Activated CD4-positive, alpha-beta T cell treated with anti-CD3 and anti-CD28 coated beads for 36 hours (primary cell): ENCODE measurements at regions of chrX and their contacts with region 1.

Region 1: GRCh38 chrX:23907498-23908218 is at the starts of genes APOO and CXorf58:
- DNase-seq: peak; percentile 95
- ATAC-seq: peak; percentile 94
- H3K4me3 Mint-ChIP-seq: peak within 1 kb of the TSS; percentile 75
- H3K27ac Mint-ChIP-seq: peak within 1 kb of the TSS; percentile 83
- H3K4me1 Mint-ChIP-seq: peaks cover 18% of the 10 kb centered on the region
- H3K27me3 Mint-ChIP-seq: no peaks in the 10 kb centered on the region
- total RNA-seq, gene APOO: 30.2 to 37.2 TPM
- total RNA-seq, gene CXorf58: 0.14 TPM in 1 of 2 experiments, not detected in the other

Region 2: DNA sequence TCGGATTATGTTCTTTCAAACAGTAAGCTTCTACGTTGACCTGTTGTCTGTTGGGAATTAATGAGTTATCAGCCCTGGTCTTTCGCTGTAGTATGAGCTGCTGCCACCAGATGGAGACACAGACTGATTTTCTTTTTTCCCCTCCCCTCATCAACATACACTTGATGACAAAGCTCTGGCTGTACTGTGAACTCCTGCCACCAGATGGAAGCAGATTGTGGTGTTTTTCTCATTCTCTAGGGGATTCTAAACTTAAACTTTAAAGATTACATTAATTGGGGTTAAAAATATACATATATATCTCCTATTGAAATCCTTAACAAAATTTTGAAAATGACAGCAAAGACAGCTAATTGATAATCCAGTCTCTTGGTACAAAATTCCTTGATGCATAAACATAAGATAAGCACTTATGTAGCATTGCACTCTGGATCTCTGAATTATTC is 1922.3 kb before region 1 on chrX:
- CTCF ChIA-PET with region 1: no interaction called
- POLR2A ChIA-PET with region 1: no interaction called
- intact Hi-C with region 1: loop called in 1 of 2 experiments (anchors 10 kb)
- DNase-seq: peak; percentile 72
- ATAC-seq: peak; percentile 79
- H3K4me3 Mint-ChIP-seq: no peak overlapping the region
- H3K27ac Mint-ChIP-seq: no peak overlapping the region
- H3K4me1 Mint-ChIP-seq: peaks cover 21% of the 10 kb centered on the region
- H3K27me3 Mint-ChIP-seq: no peaks in the 10 kb centered on the region

Region 3: GRCh38 chrX:23667239-23668177 is 240.2 kb before region 1 on chrX and contains the start of gene PRDX4:
- CTCF ChIA-PET with region 1: interaction called, 4 read pairs
- POLR2A ChIA-PET with region 1: no interaction called
- intact Hi-C with region 1: loop called in 1 of 2 experiments (anchors 1 kb)
- DNase-seq: peak; percentile 90
- ATAC-seq: peak; percentile 67
- H3K4me3 Mint-ChIP-seq: peak within 1 kb of the TSS; percentile 83
- H3K27ac Mint-ChIP-seq: peak within 1 kb of the TSS; percentile 92
- H3K4me1 Mint-ChIP-seq: peaks cover 35% of the 10 kb centered on the region
- H3K27me3 Mint-ChIP-seq: no peaks in the 10 kb centered on the region
- total RNA-seq, gene PRDX4: 48.8 to 51.5 TPM

Region 4: GRCh38 chrX:23742697-23743622 is 164.7 kb before region 1 on chrX and contains the start of gene ACOT9:
- CTCF ChIA-PET with region 1: no interaction called
- POLR2A ChIA-PET with region 1: no interaction called
- intact Hi-C with region 1: loop called in 1 of 2 experiments (anchors 1 kb)
- DNase-seq: peak; percentile 84
- ATAC-seq: peak; percentile 96
- H3K4me3 Mint-ChIP-seq: peak within 1 kb of the TSS; percentile 83
- H3K27ac Mint-ChIP-seq: peak within 1 kb of the TSS; percentile 86
- H3K4me1 Mint-ChIP-seq: peaks cover 24% of the 10 kb centered on the region
- H3K27me3 Mint-ChIP-seq: no peaks in the 10 kb centered on the region
- total RNA-seq, gene ACOT9: 31.7 to 39.9 TPM

Region 5: DNA sequence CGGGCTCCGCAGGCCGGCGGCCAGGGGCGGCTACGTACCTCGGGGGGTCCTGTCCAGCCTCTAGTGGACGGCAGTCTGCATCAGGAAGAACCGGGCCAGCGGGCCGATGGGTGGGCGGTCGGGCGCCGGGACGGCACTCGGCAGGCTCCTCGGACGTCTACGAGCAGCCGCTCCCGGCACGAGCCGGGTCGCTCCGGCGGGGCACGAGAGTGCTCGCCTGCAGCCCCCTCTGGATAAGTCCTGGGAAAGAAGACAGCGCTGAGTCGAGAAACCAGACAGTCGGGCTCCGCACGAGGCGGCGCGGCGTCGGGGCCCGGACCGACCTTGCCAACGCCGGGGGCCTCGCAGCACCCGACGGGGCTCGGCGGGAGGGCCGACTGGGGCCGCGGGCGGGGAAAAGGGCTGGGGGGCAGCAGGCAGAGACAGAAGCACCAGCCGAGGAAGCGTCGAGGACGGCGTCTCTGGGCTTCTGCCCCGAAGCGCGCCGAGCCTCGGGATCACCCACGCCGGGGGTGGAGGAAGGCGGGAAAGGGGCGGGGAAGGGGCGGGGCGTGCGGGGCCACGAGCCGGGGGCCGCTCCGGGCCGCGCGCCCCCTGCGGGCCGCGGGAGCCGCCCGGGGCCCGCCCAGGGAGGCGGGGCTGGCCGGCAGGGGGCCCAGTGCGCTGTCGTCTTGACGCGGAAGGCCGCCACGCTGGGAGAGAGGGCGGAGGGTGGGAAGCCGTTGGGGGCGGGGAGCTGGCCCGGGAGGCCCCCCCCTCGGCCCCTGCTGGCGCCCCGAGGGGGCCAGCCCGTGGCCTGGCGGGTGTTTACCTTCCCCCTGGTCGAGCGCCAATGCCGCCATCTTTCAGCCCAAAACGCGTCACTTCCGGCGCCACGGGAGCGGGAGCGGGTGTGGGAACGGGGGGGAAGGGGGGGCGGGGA is 117.4 kb after region 1 on chrX:
- CTCF ChIA-PET with region 1: interaction called, 10 read pairs
- POLR2A ChIA-PET with region 1: no interaction called
- intact Hi-C with region 1: loop called (anchors 1 to 2 kb)
- DNase-seq: peak; percentile 91
- ATAC-seq: peak; percentile 89
- H3K4me3 Mint-ChIP-seq: peak overlapping the region; percentile 83
- H3K27ac Mint-ChIP-seq: peak overlapping the region; percentile 58
- H3K4me1 Mint-ChIP-seq: peaks cover 19% of the 10 kb centered on the region
- H3K27me3 Mint-ChIP-seq: no peaks in the 10 kb centered on the region

Region 6: DNA sequence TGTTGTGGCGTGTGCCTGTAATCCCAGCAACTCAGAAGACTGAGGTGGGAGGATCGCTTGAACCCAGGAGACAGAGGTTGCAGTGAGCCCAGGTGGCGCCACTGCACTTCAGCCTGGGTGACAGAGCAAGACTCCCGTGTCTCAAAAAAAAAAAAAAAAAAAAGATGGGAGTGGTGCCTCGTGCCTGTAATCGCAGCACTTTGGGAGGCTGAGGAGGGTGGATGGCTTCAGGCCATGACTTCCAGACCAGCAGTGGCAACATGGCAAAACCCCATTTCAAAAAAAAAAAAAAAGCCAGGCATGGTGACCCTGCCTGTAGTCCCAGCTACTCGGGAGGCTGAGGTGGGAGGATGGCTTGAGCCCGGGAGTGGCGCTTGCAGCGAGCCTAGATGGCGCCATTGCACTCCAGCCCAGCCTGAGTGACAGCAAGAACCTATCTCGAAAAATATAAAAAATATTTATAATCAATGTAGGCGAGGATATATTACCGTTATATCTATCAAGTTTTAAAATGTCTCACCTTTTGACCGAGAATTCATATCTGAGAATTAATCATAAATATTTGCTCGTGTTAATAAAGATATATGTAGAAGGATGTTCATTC is 174.1 kb after region 1 on chrX:
- CTCF ChIA-PET with region 1: no interaction called
- POLR2A ChIA-PET with region 1: no interaction called
- intact Hi-C with region 1: loop called in 1 of 2 experiments (anchors 1 kb)
- DNase-seq: peak; percentile 74
- ATAC-seq: peak; percentile 59
- H3K4me3 Mint-ChIP-seq: no peak overlapping the region
- H3K27ac Mint-ChIP-seq: no peak overlapping the region
- H3K4me1 Mint-ChIP-seq: peaks cover 27% of the 10 kb centered on the region
- H3K27me3 Mint-ChIP-seq: no peaks in the 10 kb centered on the region

Region 7: GRCh38 chrX:24241822-24242648 is 334.4 kb after region 1 on chrX:
- CTCF ChIA-PET with region 1: no interaction called
- POLR2A ChIA-PET with region 1: no interaction called
- intact Hi-C with region 1: loop called in 1 of 2 experiments (anchors 5 kb)
- DNase-seq: no peak
- ATAC-seq: no peak
- H3K4me3 Mint-ChIP-seq: no peak overlapping the region
- H3K27ac Mint-ChIP-seq: no peak overlapping the region
- H3K4me1 Mint-ChIP-seq: peaks cover 11% of the 10 kb centered on the region
- H3K27me3 Mint-ChIP-seq: no peaks in the 10 kb centered on the region